ENCODE measurements at regions of chr6 and their contacts with region 1.

Region 1: GRCh38 chr6:90251295-90251992 is 45.2 kb downstream of the BACH2 start:
- DNase-seq: no peak
- H3K4me3 Mint-ChIP-seq: peak overlapping the region; percentile 8
- H3K27ac Mint-ChIP-seq: peak overlapping the region; percentile 98
- H3K4me1 Mint-ChIP-seq: peaks cover 90% of the 10 kb centered on the region
- H3K27me3 Mint-ChIP-seq: no peaks in the 10 kb centered on the region

Region 2: GRCh38 chr6:90025523-90026061 is 225.9 kb before region 1 on chr6:
- CTCF ChIA-PET with region 1: no interaction called
- intact Hi-C with region 1: loop called (anchors 1 kb)
- DNase-seq: peak; percentile 85
- H3K4me3 Mint-ChIP-seq: peak overlapping the region; percentile 47
- H3K27ac Mint-ChIP-seq: peak overlapping the region; percentile 87
- H3K4me1 Mint-ChIP-seq: peaks cover 93% of the 10 kb centered on the region
- H3K27me3 Mint-ChIP-seq: no peaks in the 10 kb centered on the region

Region 3: GRCh38 chr6:90204327-90205056 is 47.0 kb before region 1 on chr6:
- CTCF ChIA-PET with region 1: no interaction called
- intact Hi-C with region 1: loop called (anchors 1 kb)
- DNase-seq: no peak
- H3K4me3 Mint-ChIP-seq: no peak overlapping the region
- H3K27ac Mint-ChIP-seq: no peak overlapping the region
- H3K4me1 Mint-ChIP-seq: peaks cover 79% of the 10 kb centered on the region
- H3K27me3 Mint-ChIP-seq: no peaks in the 10 kb centered on the region

Region 4: GRCh38 chr6:90266905-90267621 is 15.6 kb after region 1 on chr6:
- CTCF ChIA-PET with region 1: interaction called, 8 read pairs
- intact Hi-C with region 1: loop called (anchors 1 kb)
- DNase-seq: peak; percentile 78
- H3K4me3 Mint-ChIP-seq: peak overlapping the region; percentile 45
- H3K27ac Mint-ChIP-seq: peak overlapping the region; percentile 96
- H3K4me1 Mint-ChIP-seq: peaks cover 92% of the 10 kb centered on the region
- H3K27me3 Mint-ChIP-seq: no peaks in the 10 kb centered on the region

Region 5: DNA sequence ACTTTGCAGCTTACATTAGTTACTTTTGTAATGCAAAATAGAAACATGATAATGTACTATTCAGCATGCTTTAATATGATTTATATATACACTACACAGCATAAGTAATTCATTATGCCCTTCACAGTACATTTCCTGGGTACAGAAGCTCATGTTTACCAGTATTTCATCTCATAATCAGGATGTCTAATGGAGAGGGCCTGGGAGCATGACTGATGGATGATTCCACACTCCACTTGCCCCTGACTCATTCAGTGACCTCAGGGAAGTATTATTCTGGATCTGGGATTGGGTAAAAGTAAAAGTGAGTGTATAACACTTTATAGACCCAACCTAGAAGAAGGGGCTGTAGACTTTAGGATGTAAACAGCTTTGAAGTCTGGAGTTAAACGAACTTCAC is 76.6 kb after region 1 on chr6:
- CTCF ChIA-PET with region 1: no interaction called
- intact Hi-C with region 1: no loop called
- DNase-seq: no peak
- H3K4me3 Mint-ChIP-seq: no peak overlapping the region
- H3K27ac Mint-ChIP-seq: no peak overlapping the region
- H3K4me1 Mint-ChIP-seq: peaks cover 47% of the 10 kb centered on the region
- H3K27me3 Mint-ChIP-seq: no peaks in the 10 kb centered on the region

Region 6: DNA sequence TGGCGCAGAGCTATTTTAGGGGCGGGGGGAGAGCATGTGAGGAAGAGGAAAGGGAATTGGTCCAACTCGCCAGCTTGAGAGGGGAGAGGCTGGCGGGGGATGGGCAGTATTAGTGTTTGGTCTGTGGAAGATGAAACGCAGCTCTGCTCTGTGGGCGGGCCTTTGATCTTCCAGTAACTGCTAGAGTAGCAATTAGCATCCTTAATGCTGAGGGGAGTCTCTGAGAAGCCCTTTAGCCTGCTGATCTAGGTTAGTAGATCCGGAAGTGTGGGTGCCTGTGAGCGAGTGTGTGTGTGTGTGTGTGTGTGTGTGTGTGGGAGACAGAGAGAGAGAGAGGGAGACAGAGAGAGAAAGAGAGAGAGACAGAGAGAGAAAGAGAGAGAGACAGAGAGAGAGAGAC is 162.4 kb after region 1 on chr6:
- CTCF ChIA-PET with region 1: no interaction called
- intact Hi-C with region 1: loop called (anchors 1 kb)
- DNase-seq: peak; percentile 96
- H3K4me3 Mint-ChIP-seq: peak overlapping the region; percentile 71
- H3K27ac Mint-ChIP-seq: peak overlapping the region; percentile 94
- H3K4me1 Mint-ChIP-seq: peaks cover 69% of the 10 kb centered on the region
- H3K27me3 Mint-ChIP-seq: no peaks in the 10 kb centered on the region

Region 7: DNA sequence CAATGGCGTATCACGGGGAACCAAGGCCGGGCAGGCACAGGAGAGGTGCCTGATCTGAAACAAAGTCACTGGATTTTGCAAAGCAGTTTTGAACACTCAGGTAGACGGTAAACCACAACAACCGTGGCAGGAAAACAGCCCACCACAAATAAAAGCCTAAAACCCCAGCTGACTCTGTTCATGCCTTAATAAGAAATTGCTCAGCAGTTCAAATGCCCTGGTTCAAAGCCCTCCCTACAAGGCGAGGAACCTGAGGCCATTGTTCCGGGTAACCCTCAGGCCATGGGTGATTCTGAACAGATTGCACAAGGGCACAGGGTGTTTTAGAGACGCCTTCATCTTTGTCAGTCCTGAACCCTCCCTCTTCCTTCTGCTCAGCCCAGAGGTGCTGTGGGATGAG is 221.3 kb after region 1 on chr6:
- CTCF ChIA-PET with region 1: no interaction called
- intact Hi-C with region 1: loop called (anchors 1 kb)
- DNase-seq: peak; percentile 61
- H3K4me3 Mint-ChIP-seq: peak overlapping the region; percentile 48
- H3K27ac Mint-ChIP-seq: peak overlapping the region; percentile 92
- H3K4me1 Mint-ChIP-seq: peaks cover 86% of the 10 kb centered on the region
- H3K27me3 Mint-ChIP-seq: no peaks in the 10 kb centered on the region

Measured in activated naive CD4-positive, alpha-beta T cell treated with anti-CD3 and anti-CD28 coated beads for 36 hours (primary cell).